ENCODE measurements at regions of chr11 and their contacts with region 1.

Region 1: DNA sequence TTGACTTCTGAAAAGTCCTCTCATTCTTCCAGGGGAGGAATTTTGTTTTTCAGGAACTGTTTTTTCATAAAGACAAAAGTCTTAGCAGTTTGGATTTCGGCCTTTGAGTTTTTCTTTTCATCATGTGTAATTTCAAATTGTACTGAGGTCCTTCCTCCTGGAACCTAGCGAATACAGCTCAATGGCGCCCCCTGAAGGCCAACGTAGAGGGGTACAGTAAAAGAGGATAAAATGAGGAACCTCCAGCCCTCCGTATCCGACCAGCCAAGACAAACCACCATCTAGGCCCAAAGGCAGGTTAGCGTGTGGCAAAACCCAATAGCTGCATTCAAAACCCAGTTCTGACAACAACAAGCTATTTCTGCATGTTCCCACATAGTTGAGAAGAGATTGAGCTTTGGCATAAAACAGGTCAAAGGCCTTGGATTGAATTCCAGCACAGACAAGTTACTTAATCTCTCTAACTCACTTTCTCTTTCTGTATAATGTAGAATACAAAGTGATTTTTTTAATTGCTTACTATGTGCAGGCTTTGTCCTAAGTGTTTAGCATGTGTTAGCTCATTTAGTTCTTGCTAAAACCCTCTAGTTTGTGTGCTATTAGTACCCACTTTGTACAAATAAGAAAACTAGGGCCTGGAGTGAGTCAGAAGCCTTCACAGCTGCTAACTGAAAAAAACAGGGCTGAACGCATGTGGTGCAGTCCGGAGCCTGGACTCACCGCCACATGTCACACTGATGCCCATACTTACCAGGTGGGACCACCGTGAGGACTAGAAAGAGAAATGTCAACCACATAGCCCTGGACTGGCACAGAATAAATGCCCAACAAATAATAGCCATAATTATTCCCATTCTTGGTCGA is 43.2 kb upstream of the ETS1 start:
- DNase-seq: peak; percentile 75 to 85
- H3K4me3 ChIP-seq: no peak overlapping the region
- H3K27ac ChIP-seq: peak overlapping the region; percentile 15 to 58
- H3K4me1 ChIP-seq: no peaks in the 10 kb centered on the region
- H3K27me3 ChIP-seq: no peaks in the 10 kb centered on the region
- CTCF ChIP-seq: peak; percentile 90 to 98 (median 94)
- POLR2A ChIP-seq: no peak

Region 2: GRCh38 chr11:128172046-128172878 is 458.3 kb before region 1 on chr11:
- intact Hi-C with region 1: loop called (anchors 10 kb)
- DNase-seq: peak; percentile 76 to 80
- H3K4me3 ChIP-seq: no peak overlapping the region
- H3K27ac ChIP-seq: peak overlapping the region in 1 of 2 donors; percentile 16
- H3K4me1 ChIP-seq: no peaks in the 10 kb centered on the region
- H3K27me3 ChIP-seq: no peaks in the 10 kb centered on the region
- CTCF ChIP-seq: peak; percentile 75 to 80 (median 79)
- POLR2A ChIP-seq: no peak

Region 3: DNA sequence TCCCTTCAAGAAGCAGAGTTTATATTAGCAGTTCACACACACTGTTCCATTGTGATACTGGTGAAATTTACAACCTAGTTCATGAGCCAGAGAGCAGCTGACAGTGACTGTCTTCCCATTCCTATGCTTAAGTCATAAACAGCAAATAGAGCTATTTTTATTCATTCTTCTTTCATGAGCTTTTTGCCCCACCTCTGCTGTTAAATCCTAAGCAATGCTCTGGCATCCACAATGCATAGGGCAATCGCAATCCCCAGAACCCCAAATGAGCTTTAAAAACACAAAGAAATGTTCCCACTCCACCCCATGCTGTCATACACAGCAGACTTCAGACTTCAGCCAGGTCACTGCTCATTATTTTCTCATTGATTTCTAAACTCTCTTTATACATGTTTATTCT is 350.7 kb before region 1 on chr11:
- intact Hi-C with region 1: loop called (anchors 10 kb)
- DNase-seq: no peak
- H3K4me3 ChIP-seq: no peak overlapping the region
- H3K27ac ChIP-seq: no peak overlapping the region
- H3K4me1 ChIP-seq: no peaks in the 10 kb centered on the region
- H3K27me3 ChIP-seq: no peaks in the 10 kb centered on the region
- CTCF ChIP-seq: no peak
- POLR2A ChIP-seq: no peak

Measured in breast epithelium (tissue), 4 donors.